ENCODE measurements at regions of chr9 and their contacts with region 1.

Region 1: DNA sequence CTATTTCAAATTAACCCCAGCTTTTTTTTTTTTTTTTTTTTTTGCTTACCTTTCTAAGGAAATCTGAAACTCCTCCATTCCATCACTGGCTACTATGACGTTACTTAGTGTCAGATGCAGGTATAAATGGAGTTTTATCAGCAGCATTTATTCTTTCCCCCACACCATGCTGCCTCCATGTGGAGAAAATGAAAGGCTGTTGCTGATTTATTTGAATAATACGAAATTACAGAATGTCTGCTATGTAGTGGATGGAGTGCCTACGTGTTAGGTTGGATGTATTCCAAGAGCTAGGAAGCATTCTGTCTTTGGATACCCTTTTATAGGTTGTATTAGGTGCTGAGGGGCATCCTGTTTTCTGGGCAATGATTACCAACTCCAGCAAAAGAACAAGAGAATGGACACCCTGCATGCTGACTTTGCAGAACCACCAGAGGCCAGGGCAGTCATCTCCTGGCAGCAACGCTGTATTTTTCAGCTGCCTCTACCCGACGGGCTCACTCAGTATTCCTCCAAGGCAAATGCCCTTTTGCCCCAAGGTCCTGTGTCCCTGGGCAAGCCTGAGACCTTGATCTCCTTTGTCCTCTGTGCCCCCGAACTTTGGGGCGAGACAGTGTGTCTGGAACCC is 199.5 kb downstream of the ALDH1A1 start:
- DNase-seq: no peak
- H3K4me3 ChIP-seq: no peak overlapping the region
- H3K27ac ChIP-seq: no peak overlapping the region
- H3K4me1 ChIP-seq: no peaks in the 10 kb centered on the region
- H3K27me3 ChIP-seq: peaks cover 2% of the 10 kb centered on the region
- CTCF ChIP-seq: peak; percentile 48 to 62

Region 2: DNA sequence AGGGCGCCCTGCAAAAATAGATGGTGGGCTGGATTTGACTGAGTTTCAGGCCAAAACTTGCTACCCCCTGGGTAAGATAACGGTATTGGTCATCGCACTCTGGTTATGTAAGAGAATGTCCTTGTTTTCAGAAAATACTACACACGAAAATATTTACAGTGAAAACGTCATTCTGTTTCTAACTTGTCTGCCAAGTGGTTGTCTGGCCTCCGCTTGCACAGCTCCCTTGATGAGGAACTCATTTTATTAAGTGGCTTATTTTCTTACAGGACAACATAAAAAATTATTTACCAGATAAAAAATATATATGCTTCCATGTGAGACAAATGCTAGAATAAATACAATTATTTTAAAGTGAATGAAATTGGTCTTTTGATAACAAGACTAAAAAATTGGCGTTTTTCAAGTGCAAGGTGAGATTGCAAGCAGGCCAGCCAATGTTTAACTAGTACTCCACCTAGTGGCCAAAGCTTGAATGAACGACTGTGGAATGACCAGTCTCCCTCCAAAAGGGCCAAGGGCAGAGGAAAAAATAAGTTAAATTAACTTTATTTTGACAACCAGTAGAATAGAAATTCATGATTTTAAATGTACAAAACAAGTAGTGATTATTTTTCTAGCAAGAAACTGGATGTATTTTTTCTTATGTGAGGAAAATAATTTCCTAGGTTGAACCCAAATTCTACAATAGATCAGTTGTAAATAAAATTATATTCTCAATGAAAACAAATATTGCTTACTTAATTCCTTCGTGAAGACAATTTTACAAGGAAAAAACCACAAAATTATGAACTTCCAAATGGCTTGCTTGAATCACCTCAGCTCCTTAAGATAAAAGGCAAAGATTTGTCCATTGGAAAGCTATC is 481.5 kb before region 1 on chr9:
- CTCF ChIA-PET with region 1: no interaction called
- dilution Hi-C with region 1: no loop called
- in situ Hi-C with region 1: loop called (anchors 10 to 25 kb)
- intact Hi-C with region 1: no loop called
- DNase-seq: peak; percentile 35
- H3K4me3 ChIP-seq: no peak overlapping the region
- H3K27ac ChIP-seq: no peak overlapping the region
- H3K4me1 ChIP-seq: peaks cover 14% of the 10 kb centered on the region
- H3K27me3 ChIP-seq: no peaks in the 10 kb centered on the region
- CTCF ChIP-seq: peak; percentile 77 to 86

Region 3: GRCh38 chr9:72292256-72292682 is 461.1 kb before region 1 on chr9:
- CTCF ChIA-PET with region 1: interaction called, 6 read pairs
- dilution Hi-C with region 1: no loop called
- in situ Hi-C with region 1: loop called in 1 of 2 experiments (anchors 25 kb)
- intact Hi-C with region 1: loop called (anchors 1 kb)
- DNase-seq: peak; percentile 27
- H3K4me3 ChIP-seq: no peak overlapping the region
- H3K27ac ChIP-seq: no peak overlapping the region
- H3K4me1 ChIP-seq: peaks cover 8% of the 10 kb centered on the region
- H3K27me3 ChIP-seq: no peaks in the 10 kb centered on the region
- CTCF ChIP-seq: peak; percentile 45 to 48

Region 4: DNA sequence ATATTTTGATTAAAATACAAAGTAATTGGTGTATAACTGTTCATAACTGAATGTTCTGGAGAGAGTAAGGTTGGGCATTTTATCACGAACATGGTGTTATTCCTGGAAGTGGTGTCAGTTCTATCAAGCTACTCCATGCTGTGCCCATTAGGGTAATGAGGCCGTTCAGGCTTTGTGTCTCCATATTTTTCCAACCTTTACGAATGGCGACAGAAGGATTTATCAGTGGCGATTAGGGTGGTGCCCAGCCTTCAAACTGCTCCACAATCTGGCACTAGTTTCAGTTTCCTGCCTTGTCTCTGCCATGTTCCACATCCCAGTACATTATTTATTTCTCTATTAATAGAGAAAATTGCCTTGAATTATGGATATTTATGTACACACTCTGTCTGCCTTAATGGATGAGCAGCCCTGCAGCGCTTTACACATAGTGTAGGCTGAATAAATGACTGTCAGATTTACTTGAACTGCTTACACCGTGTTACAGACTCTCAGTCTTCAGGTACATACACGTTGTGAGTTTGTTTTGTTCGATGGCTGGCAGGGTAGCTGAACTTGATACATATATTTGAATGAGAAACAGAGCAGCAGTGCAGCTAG is 255.8 kb before region 1 on chr9:
- CTCF ChIA-PET with region 1: interaction called, 11 read pairs
- dilution Hi-C with region 1: no loop called
- in situ Hi-C with region 1: no loop called
- intact Hi-C with region 1: no loop called
- DNase-seq: no peak
- H3K4me3 ChIP-seq: no peak overlapping the region
- H3K27ac ChIP-seq: no peak overlapping the region
- H3K4me1 ChIP-seq: no peaks in the 10 kb centered on the region
- H3K27me3 ChIP-seq: no peaks in the 10 kb centered on the region
- CTCF ChIP-seq: no peak

Region 5: GRCh38 chr9:72592502-72593403 is 160.6 kb before region 1 on chr9:
- CTCF ChIA-PET with region 1: no interaction called
- dilution Hi-C with region 1: no loop called
- in situ Hi-C with region 1: no loop called
- intact Hi-C with region 1: loop called (anchors 2 kb)
- DNase-seq: peak; percentile 46
- H3K4me3 ChIP-seq: no peak overlapping the region
- H3K27ac ChIP-seq: no peak overlapping the region
- H3K4me1 ChIP-seq: no peaks in the 10 kb centered on the region
- H3K27me3 ChIP-seq: no peaks in the 10 kb centered on the region
- CTCF ChIP-seq: peak; percentile 66 to 72

Region 6: DNA sequence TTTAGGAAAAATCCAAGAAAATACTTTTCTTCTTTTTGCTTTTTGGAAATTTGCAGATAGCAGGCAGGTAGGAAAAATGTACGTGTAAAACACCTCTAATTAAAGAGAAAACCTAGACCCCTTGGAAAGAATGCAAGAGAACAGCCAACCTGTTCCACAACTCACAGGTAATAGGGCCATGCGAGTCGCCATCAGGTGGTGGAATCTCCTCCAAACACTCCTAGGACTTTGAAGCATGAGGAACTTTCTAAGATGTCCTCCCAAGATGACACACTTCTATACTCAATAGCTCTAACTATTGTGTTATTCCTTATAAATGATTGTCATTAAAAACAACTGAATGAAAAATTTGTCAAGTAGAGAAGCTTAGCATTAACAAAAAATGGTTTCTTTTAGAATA is 58.0 kb before region 1 on chr9:
- CTCF ChIA-PET with region 1: no interaction called
- dilution Hi-C with region 1: no loop called
- in situ Hi-C with region 1: no loop called
- intact Hi-C with region 1: no loop called
- DNase-seq: no peak
- H3K4me3 ChIP-seq: no peak overlapping the region
- H3K27ac ChIP-seq: no peak overlapping the region
- H3K4me1 ChIP-seq: no peaks in the 10 kb centered on the region
- H3K27me3 ChIP-seq: no peaks in the 10 kb centered on the region
- CTCF ChIP-seq: peak in 1 of 2 donors; percentile 11

Region 7: DNA sequence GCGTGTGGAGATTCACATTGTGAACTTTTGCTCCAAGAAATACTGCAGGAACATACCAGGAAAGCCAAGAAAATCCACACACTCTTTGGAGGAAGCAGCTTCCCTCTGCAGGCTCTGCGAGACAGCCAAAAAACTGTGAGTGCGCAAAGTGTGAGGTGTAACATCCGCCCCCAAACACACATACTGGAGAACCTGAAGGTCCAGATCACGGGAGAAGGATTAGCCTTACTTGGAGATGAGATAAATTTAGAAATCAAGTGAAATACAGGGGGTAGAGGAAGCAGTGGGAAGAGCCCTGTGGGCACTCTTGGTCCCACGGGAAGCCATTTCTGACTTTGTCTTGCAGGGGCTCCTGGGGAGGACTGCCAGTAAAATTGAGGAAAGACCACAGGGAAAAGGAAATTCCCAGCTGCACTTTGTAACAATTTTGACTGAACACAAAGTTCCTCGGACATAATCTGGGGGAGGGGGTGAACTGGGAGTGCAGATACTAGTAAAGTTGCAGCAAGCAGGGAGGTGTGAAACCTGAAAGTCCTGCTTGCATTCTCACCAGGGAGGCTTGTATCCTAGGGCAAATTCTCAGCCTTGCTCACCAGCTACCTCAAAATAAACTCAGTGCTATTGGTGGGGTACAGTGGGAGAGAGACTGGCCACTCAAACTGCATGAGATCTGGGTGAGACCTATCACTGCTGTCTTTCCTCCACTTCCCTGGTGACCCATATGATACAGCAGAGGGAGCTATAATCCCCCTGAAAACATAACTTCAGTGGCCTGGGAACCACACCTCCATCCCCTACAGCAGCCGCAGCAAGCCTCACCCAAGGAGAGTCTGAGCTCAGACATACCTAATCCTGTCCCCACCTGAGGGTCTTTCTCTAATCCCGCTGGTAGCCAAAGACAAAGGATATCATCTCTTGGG is 90.4 kb after region 1 on chr9:
- CTCF ChIA-PET with region 1: no interaction called
- dilution Hi-C with region 1: no loop called
- in situ Hi-C with region 1: no loop called
- intact Hi-C with region 1: no loop called
- DNase-seq: peak; percentile 9
- H3K4me3 ChIP-seq: no peak overlapping the region
- H3K27ac ChIP-seq: no peak overlapping the region
- H3K4me1 ChIP-seq: no peaks in the 10 kb centered on the region
- H3K27me3 ChIP-seq: no peaks in the 10 kb centered on the region
- CTCF ChIP-seq: peak; percentile 21 to 29

Region 8: DNA sequence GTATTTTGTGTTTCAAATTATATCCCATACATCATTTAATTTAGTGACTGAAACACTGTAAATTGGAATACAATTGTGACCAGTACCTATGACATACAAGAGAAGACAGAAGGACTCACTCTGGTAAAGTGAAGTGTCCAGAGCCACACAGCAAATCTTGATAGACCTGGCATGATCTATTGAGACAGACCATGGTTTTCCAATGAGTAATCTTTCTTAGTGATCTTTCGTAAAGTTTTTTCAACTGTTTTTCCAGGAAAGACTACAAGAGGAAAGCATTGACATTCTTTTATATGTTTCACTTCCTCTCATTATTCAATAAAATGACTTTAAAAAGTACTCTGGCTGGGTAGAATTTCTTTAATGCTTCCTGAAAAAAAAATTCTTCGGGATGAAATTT is 242.7 kb after region 1 on chr9:
- CTCF ChIA-PET with region 1: no interaction called
- dilution Hi-C with region 1: no loop called
- in situ Hi-C with region 1: no loop called
- intact Hi-C with region 1: no loop called
- DNase-seq: no peak
- H3K4me3 ChIP-seq: no peak overlapping the region
- H3K27ac ChIP-seq: no peak overlapping the region
- H3K4me1 ChIP-seq: no peaks in the 10 kb centered on the region
- H3K27me3 ChIP-seq: no peaks in the 10 kb centered on the region
- CTCF ChIP-seq: no peak